ENCODE measurements at regions of chr16 and their contacts with region 1.

Region 1: GRCh38 chr16:89104930-89105571 is 11.4 kb downstream of the ACSF3 start:
- DNase-seq: no peak
- H3K4me3 Mint-ChIP-seq: no peak overlapping the region
- H3K27ac Mint-ChIP-seq: no peak overlapping the region
- H3K4me1 Mint-ChIP-seq: peaks cover 22% of the 10 kb centered on the region
- H3K27me3 Mint-ChIP-seq: no peaks in the 10 kb centered on the region

Region 2: GRCh38 chr16:89093602-89094251 is 11.3 kb before region 1 on chr16 and contains the start of gene ACSF3:
- CTCF ChIA-PET with region 1: no interaction called
- POLR2A ChIA-PET with region 1: interaction called, 11 read pairs
- DNase-seq: peak; percentile 73
- H3K4me3 Mint-ChIP-seq: peak within 1 kb of the TSS; percentile 92
- H3K27ac Mint-ChIP-seq: peak within 1 kb of the TSS; percentile 86
- H3K4me1 Mint-ChIP-seq: peaks cover 46% of the 10 kb centered on the region
- H3K27me3 Mint-ChIP-seq: peaks cover 15% of the 10 kb centered on the region
- total RNA-seq, gene ACSF3: 44.4 to 45.3 TPM

Region 3: GRCh38 chr16:89122322-89122851 is 17.3 kb after region 1 on chr16:
- CTCF ChIA-PET with region 1: no interaction called
- POLR2A ChIA-PET with region 1: no interaction called
- DNase-seq: peak; percentile 35
- H3K4me3 Mint-ChIP-seq: no peak overlapping the region
- H3K27ac Mint-ChIP-seq: no peak overlapping the region
- H3K4me1 Mint-ChIP-seq: peaks cover 9% of the 10 kb centered on the region
- H3K27me3 Mint-ChIP-seq: no peaks in the 10 kb centered on the region

Region 4: DNA sequence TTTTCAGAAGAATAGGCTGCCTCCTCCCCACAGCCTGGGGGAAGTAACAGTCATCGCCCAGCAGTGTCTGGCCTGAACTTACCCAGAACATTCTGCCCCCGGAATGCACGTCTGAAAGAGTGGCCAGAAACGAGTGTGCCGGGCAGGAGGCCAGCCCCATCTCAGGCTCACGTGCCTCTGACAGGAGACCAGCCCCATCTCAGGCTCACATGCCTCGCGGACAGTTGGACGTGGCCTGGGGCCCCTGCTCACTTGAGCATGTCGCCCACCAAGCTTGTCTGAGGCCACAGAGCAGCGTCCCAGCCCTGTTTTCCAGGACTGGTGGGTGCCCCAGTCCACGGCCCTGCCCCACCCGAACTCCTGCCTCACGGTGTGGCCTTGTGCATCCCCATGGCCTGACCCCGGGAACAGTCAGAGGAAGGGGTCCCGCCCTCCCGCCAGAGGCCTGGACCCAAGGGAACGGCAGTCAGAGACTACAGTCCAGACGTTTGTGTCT is 50.2 kb after region 1 on chr16:
- CTCF ChIA-PET with region 1: no interaction called
- POLR2A ChIA-PET with region 1: no interaction called
- DNase-seq: no peak
- H3K4me3 Mint-ChIP-seq: no peak overlapping the region
- H3K27ac Mint-ChIP-seq: no peak overlapping the region
- H3K4me1 Mint-ChIP-seq: no peaks in the 10 kb centered on the region
- H3K27me3 Mint-ChIP-seq: no peaks in the 10 kb centered on the region